ENCODE measurements at regions of chr14 and their contacts with region 1.

Region 1: DNA sequence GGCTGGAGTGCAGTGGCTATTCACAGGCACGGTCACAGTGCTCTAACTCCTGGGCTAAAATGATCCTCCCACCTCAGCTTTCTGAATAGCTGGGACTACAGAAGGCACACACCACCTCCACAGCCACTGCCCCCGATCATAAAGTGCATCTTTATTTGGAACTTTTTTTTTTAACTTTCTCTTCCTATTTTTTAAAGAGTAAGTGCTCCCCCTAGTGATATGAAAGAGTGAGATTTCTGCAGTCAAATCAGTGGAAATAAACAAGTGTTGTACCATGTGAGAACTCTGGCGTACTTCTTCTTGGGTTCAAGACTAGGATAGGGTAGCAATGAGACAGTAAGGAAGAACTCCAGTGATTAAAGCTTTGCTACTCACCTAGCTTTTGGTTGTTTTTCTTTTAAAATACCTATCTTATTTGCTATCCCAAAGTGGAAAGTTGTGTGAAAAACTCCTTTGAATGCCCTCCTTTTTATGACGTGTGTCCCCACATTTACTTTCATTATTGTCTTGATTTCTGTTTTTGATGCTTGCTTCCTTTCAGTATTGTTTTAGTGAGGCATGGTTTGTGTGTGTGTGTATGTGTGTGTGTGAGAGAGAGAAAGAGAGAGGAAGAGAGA is 6.6 kb downstream of the PPP4R4 start:
- DNase-seq: peak; percentile 57

Region 2: DNA sequence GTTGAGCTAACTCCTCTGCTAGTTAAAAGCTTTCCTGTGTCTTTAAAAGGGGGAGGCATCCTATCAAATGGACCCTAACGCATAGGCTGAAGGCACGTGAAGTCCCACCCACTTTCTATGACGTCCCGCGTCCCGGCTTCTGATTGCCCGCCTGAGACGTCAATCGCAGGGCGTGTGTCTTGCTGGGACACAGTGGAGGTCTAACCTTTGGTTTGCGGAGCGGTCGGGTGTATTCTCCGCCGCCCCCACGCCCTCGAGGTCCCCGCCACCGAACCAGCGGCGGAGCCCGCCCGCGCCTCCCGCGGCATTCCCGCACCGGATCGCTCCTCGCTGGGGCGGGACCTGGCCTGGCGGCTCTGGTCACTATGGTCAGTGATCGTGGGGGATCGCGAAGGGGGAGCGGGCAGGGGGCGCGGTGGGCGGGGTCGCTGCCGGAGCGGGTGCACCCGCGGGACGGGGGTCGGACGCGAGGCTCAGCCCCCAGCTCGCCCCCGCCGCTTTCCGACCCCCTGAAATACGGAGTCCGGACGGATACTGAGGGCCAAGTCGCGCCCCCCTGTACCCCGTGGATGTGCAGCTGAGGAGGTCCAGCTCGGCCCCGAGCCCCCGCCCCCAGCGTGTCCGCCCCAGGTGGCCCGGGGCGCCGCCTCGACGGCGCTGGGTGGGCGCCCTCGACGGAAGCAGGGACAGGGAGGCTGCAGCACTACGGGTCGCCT is 154.4 kb before region 1 on chr14 and contains the start of gene OTUB2:
- in situ Hi-C with region 1: loop called (anchors 25 kb)
- DNase-seq: peak; percentile 99
- total RNA-seq, gene OTUB2: 1.5 and 3.3 TPM in 2 replicates

Region 3: DNA sequence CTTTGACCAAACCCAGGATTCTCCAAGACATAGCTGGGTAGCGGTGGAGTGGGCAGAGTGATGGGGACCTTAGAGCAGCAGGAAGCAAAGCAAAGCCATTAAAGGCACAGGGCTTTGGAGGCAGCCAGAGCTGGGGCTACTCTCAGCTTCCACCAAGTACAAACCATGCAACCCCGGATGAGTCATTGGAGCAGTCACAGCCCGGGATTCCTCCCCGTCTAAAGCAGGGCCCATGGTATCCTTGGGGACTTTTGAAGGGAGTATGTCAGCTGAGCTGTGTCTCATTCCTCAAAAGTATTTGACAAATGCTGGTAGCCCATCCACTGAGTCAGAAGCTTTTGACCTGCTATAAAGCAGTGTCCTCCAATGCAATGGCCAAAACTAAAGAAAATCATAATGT is 79.9 kb before region 1 on chr14:
- in situ Hi-C with region 1: no loop called
- DNase-seq: no peak

Measured in G401 (cell line).